AG04450 (cell line): ENCODE measurements at regions of chr12 and their contacts with region 1.

Region 1: GRCh38 chr12:114684098-114684869 is at the start of gene TBX3:
- DNase-seq: peak; percentile 98
- H3K4me3 ChIP-seq: peak within 1 kb of the TSS; percentile 96
- H3K27ac ChIP-seq: peak within 1 kb of the TSS; percentile 98
- H3K27me3 ChIP-seq: no peaks in the 10 kb centered on the region
- CTCF ChIP-seq: peak; percentile 63
- polyA plus RNA-seq, gene TBX3: 42.2 and 54.8 TPM in 2 replicates

Region 2: GRCh38 chr12:114547636-114548035 is 136.6 kb before region 1 on chr12:
- CTCF ChIA-PET with region 1: no interaction called
- POLR2A ChIA-PET with region 1: no interaction called
- DNase-seq: no peak
- H3K4me3 ChIP-seq: no peak overlapping the region
- H3K27ac ChIP-seq: no peak overlapping the region
- H3K27me3 ChIP-seq: no peaks in the 10 kb centered on the region
- CTCF ChIP-seq: no peak

Region 3: DNA sequence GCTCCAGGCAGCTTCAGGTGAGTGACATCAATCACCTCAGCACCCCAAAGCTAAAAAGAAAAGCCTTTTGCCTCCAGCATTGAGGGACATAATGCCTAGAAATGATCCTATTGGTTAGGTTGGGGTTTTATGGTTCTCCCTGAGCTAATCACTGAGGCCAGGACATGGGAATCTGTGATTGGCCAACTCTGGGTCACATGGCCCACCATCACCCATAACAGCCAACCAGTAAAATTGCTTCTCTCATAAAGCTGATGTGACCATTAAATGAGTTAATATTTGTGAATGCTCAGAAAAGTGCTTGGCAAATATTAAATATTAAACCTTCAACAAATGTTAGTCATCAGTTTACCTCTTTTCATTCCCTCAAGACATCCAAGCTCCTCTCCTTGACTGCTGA is 60.5 kb before region 1 on chr12:
- CTCF ChIA-PET with region 1: no interaction called
- POLR2A ChIA-PET with region 1: no interaction called
- DNase-seq: no peak
- H3K4me3 ChIP-seq: no peak overlapping the region
- H3K27ac ChIP-seq: no peak overlapping the region
- H3K27me3 ChIP-seq: no peaks in the 10 kb centered on the region
- CTCF ChIP-seq: no peak

Region 4: DNA sequence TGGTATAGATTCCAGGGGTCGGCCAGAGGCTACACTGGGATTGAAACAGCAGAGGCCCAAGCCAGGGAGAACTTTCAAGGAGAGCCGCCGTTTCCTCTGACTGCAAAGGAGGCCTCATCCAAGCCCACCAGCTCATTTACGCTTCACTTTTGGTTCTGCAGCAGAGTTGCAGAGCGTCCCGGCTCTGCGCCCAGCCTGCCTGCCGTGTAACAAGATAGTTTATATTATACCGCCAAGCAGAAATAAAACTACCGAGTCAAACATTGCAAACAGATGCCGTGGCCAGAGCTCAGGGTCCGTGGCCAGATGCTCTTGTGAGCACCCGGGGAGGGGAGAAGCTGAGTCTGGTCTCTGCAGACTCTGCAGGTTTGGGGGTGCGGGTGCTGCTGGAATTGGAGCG is 60.4 kb after region 1 on chr12:
- CTCF ChIA-PET with region 1: interaction called, 13 read pairs
- POLR2A ChIA-PET with region 1: interaction called, 47 read pairs
- DNase-seq: peak; percentile 84
- H3K4me3 ChIP-seq: peak overlapping the region; percentile 23; the same call in 1 of the 2 replicates
- H3K27ac ChIP-seq: peak overlapping the region; percentile 67
- H3K27me3 ChIP-seq: no peaks in the 10 kb centered on the region
- CTCF ChIP-seq: no peak

Region 5: DNA sequence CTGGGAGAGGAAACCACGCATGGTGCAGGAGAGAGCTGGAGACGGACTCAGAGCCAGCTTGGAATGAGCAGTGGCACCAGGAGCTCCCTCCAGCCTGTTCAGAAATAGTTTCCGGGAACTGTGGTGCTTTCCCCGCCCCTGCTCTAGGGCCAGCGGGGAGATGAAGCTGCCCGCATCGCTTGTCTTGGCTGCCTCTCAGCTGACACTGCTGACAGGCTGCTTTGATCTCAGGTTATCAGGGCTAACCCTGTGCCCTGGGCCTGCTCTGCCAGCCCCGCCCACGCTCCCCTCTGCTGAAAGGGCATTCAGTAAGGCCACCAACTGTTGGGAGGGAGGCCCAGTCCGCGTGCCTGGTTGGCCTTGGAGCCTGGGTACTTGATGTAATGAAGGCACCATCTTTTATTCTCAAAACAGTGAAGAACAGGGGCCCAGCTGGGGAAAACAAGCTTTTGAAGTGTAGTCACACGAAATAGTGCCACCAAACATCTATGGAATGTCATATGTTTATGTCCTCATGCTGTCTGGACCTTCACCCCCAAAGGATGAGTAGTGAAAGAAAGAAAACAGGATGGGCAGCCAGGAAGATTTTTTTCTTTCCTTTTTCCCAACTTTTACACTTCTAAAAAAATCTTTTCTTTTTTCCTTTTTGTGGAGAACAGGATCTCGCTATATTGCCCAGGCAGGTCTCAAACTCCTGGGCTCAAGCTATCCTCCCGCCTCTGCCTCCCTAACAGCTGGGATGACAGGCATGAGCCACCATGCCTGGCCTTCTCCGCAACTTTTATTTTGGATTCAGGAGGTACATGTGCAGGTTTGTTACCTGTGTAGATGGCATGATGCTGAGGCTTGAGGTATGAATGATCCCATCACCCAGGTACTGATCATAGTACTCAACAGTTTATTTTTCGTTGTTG is 115.5 kb after region 1 on chr12:
- CTCF ChIA-PET with region 1: interaction called, 5 read pairs
- POLR2A ChIA-PET with region 1: interaction called, 11 read pairs
- DNase-seq: no peak
- H3K4me3 ChIP-seq: no peak overlapping the region
- H3K27ac ChIP-seq: peak overlapping the region; percentile 47
- H3K27me3 ChIP-seq: no peaks in the 10 kb centered on the region
- CTCF ChIP-seq: no peak

Region 6: GRCh38 chr12:114903083-114903691 is 218.9 kb after region 1 on chr12:
- CTCF ChIA-PET with region 1: no interaction called
- POLR2A ChIA-PET with region 1: interaction called, 12 read pairs
- DNase-seq: peak; percentile 81
- H3K4me3 ChIP-seq: peak overlapping the region; percentile 44
- H3K27ac ChIP-seq: peak overlapping the region; percentile 66
- H3K27me3 ChIP-seq: no peaks in the 10 kb centered on the region
- CTCF ChIP-seq: no peak

Region 7: DNA sequence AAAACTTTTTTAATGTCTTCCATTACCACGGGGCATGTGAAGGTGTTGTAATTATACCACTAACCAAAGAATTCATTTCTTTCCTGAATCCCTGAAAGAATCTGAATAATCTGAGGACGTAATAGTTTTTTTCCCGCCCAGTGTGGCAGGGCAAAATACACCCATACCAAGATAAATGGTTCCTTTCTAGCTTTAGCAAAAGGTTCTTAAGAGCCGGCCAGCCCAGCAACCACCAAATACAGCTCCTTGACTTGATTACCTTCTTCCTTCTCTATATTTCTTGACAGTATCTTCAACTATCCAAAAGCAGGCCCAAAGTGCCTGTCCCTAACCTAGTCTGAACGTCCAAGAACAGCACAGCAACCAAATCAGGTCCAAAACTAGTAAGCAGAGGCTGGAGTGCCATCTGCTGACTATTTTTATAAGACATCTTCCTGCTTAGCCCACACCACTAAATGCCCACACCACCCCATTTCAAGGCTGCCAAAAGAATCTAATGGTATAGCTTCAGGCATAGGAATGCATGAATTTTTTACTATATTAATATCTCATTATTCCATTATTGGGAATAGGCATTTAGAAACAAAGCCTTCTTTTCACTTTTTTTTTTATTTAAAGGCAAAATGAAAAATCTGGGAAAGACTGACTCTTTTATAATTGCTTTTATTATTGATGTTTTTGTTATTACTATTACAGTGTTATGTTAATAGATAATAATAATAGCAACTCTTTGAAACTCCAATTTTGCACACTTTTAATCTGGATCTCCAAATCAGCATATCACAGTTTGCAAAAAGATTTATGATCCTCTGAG is 1068.8 kb after region 1 on chr12:
- CTCF ChIA-PET with region 1: interaction called, 11 read pairs
- POLR2A ChIA-PET with region 1: interaction called, 4 read pairs
- DNase-seq: peak; percentile 48
- H3K4me3 ChIP-seq: no peak overlapping the region
- H3K27ac ChIP-seq: no peak overlapping the region
- H3K27me3 ChIP-seq: no peaks in the 10 kb centered on the region
- CTCF ChIP-seq: peak; percentile 79